ENCODE measurements at regions of chr5 and their contacts with region 1.

Region 1: GRCh38 chr5:87340716-87341115 is 72.0 kb downstream of the CCNH start:
- DNase-seq: peak; percentile 90
- ATAC-seq: peak; percentile 98
- H3K4me3 ChIP-seq: no peak overlapping the region
- H3K27ac ChIP-seq: peak overlapping the region; percentile 61
- H3K4me1 ChIP-seq: no peaks in the 10 kb centered on the region; the same call in 1 of the 2 replicates
- H3K27me3 ChIP-seq: no peaks in the 10 kb centered on the region
- CTCF ChIP-seq: no peak
- EP300 ChIP-seq: no peak
- POLR2A ChIP-seq: no peak
- RAD21 ChIP-seq: peak; percentile 11; the same call in 1 of the 2 replicates

Region 2: DNA sequence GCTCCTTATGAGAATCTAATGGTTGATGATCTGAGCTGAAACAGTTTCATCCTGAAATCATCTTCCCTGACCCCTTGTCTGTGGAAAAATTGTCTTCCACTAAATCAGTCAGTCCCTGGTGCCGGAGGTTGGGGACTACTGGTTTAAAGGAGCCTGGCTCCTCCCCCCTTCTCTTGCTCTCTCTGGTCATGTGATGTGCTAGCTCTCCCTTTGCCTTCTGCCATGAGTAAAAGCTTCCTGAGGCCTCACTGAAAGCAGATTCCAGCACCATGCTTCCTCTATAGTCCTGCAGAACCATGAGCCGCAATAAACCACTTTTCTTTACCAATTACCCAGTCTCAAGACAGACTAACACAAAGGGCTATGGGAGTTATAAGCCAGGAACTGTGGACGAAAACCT is 18.3 kb before region 1 on chr5:
- CTCF ChIA-PET with region 1: interaction called, 4 read pairs
- POLR2A ChIA-PET with region 1: no interaction called
- RAD21 ChIA-PET with region 1: interaction called, 3 read pairs
- SMC1A ChIA-PET with region 1: interaction called, 11 read pairs
- in situ Hi-C with region 1: no loop called
- intact Hi-C with region 1: no loop called
- DNase-seq: no peak
- ATAC-seq: no peak
- H3K4me3 ChIP-seq: no peak overlapping the region
- H3K27ac ChIP-seq: no peak overlapping the region
- H3K4me1 ChIP-seq: no peaks in the 10 kb centered on the region
- H3K27me3 ChIP-seq: no peaks in the 10 kb centered on the region
- CTCF ChIP-seq: no peak
- EP300 ChIP-seq: no peak
- POLR2A ChIP-seq: no peak
- RAD21 ChIP-seq: no peak

Region 3: GRCh38 chr5:87354496-87354895 is 13.8 kb after region 1 on chr5:
- CTCF ChIA-PET with region 1: interaction called, 3 read pairs
- POLR2A ChIA-PET with region 1: no interaction called
- RAD21 ChIA-PET with region 1: interaction called, 7 read pairs
- SMC1A ChIA-PET with region 1: interaction called, 10 read pairs
- in situ Hi-C with region 1: no loop called
- intact Hi-C with region 1: no loop called
- DNase-seq: peak; percentile 27
- ATAC-seq: peak; percentile 84
- H3K4me3 ChIP-seq: no peak overlapping the region
- H3K27ac ChIP-seq: no peak overlapping the region
- H3K4me1 ChIP-seq: peaks cover 3% of the 10 kb centered on the region; the same call in 1 of the 2 replicates
- H3K27me3 ChIP-seq: no peaks in the 10 kb centered on the region
- CTCF ChIP-seq: no peak
- EP300 ChIP-seq: no peak
- POLR2A ChIP-seq: no peak
- RAD21 ChIP-seq: no peak